BJ (cell line): ENCODE measurements at regions of chr2 and their contacts with region 1.

Region 1: GRCh38 chr2:219498280-219499057 is at the start of gene GMPPA:
- DNase-seq: peak; percentile 99
- H3K4me3 ChIP-seq: peak within 1 kb of the TSS; percentile 90
- H3K27me3 ChIP-seq: no peaks in the 10 kb centered on the region
- CTCF ChIP-seq: 0 out of 2 replicates have a peak, but pooled peaks have one; percentile 4
- polyA plus RNA-seq, gene GMPPA: 123 and 171 TPM in 2 replicates

Region 2: DNA sequence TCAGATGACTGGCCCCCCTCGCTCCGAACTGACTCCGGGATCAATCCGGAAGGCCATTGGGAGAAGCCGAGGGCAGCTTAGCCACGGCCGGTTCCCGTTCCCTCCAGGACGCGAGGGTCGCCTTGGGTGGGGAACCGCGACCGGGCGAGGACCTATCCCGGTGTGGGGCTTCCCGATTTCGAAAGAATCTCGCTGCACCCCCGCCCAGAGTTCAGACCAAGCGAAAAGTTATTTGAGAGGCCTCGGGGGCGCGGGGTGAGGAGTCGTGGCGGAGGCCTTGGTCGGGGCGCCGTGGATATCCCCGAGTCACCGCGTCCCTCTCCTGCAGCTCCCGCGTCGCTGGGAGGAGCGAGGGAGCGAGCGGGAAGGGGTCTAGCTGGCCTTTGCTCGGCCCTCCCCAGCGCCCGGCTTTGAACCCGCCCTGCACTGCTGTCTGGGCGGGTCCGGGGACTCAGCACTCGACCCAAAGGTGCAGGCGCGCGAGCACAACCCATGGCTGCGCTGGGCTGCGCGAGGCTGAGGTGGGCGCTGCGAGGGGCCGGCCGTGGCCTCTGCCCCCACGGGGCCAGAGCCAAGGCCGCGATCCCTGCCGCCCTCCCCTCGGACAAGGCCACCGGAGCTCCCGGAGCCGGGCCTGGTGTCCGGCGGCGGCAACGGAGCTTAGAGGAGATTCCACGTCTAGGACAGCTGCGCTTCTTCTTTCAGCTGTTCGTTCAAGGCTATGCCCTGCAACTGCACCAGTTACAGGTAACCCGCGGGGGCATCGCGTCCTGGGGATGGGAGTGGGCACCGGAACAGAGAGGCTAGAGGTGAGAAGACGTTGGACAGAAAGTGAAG is 716.6 kb before region 1 on chr2 and contains the start of gene CYP27A1:
- CTCF ChIA-PET with region 1: no interaction called
- POLR2A ChIA-PET with region 1: no interaction called
- DNase-seq: no peak
- H3K4me3 ChIP-seq: peak within 1 kb of the TSS; percentile 61
- H3K27me3 ChIP-seq: no peaks in the 10 kb centered on the region
- CTCF ChIP-seq: no peak
- polyA plus RNA-seq, gene CYP27A1: 17.2 and 26.8 TPM in 2 replicates

Region 3: GRCh38 chr2:219452838-219453317 is 45.6 kb before region 1 on chr2:
- CTCF ChIA-PET with region 1: interaction called, 8 read pairs
- POLR2A ChIA-PET with region 1: interaction called, 26 read pairs
- DNase-seq: peak; percentile 78
- H3K4me3 ChIP-seq: no peak overlapping the region
- H3K27me3 ChIP-seq: no peaks in the 10 kb centered on the region
- CTCF ChIP-seq: no peak

Region 4: DNA sequence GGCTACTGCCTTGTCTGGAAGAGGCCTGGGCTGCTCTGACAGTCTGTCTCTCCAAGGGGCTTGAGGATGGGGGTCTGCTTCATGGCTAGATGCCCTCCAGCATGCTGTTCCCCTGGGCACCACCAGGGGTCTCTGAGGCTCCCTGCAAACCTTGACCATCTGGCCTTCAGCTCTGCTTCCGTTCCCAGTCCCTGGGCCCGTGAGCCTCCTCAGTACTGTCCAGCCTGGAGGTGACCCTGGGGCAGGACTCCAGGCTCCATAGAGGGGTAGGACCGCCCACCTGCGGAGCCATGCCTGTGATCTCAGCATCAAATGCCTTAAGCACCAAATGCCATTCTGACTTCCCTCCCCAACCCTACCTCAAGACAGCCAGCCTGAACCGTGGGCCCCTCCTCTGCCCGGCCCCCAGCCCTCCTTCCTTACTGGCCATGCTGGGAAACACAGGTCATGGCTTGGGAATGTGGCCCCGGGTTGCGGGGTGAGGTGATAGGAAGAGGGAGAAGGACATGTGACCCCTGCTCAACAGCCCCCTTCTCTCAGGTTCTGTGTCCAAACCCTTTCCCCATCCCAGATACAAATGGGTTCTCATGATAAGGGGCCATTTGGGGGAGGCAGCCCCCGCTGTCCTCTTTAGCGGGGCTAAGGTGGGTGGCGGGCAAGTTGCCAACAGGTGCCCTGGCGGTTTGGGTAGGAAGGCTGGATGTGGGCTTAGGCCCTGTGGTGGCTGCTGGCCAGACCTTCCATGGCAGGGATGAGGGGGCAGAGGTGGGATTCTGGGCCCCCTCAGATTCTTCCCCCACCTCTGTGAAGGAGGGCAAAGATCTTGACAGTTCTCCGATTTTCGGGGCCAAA is 38.8 kb before region 1 on chr2:
- CTCF ChIA-PET with region 1: interaction called, 10 read pairs
- POLR2A ChIA-PET with region 1: no interaction called
- DNase-seq: no peak
- H3K4me3 ChIP-seq: no peak overlapping the region
- H3K27me3 ChIP-seq: no peaks in the 10 kb centered on the region
- CTCF ChIP-seq: peak; percentile 98

Region 5: GRCh38 chr2:219469186-219469724 is 29.2 kb before region 1 on chr2:
- CTCF ChIA-PET with region 1: interaction called, 12 read pairs
- POLR2A ChIA-PET with region 1: interaction called, 4 read pairs
- DNase-seq: no peak
- H3K4me3 ChIP-seq: no peak overlapping the region
- H3K27me3 ChIP-seq: no peaks in the 10 kb centered on the region
- CTCF ChIP-seq: no peak

Region 6: DNA sequence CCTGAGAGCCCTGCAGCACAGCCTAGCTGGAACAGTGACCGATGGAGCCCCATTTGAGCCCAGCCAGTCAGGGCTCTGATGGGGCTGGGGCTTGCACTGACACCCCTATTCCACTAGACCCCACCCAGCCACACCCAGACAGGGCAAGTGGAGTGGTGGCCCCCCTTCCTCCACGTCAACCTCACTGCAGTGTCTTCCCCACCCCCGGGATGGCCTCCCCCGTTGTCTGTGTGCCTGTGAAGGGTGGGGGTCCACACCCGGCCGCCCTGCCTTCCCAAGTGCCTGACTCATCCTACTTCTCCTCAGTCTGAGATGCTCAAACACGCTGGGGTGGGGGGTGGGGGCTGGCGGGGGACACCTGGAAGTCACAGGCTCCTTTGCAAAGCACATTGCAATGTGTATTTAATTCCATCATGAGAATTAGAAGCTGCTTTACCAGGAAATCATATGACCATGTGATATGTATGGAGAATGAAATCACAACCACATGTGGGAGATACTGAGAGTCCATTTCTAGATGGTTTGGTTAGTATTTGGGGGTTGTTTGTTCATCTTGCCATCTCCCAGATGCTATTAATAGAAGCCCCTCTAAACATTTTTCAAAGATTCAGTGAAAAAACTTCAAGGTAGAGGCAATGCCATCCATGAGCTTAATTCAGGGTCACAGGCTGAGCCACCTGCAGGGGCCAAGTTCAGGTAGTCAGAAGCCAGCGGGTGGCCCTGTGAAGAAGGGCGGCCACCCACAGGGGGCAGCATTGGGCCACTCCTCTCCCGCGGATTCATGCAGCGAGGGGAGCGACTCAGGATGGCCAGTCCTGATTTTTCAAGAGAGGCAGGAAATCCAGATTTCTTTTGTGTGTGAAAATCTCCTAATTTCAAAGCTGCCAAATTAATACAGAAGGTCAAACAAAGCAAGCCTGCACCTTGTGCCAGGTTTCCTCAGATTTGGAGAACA is 22.5 kb before region 1 on chr2:
- CTCF ChIA-PET with region 1: interaction called, 21 read pairs
- POLR2A ChIA-PET with region 1: no interaction called
- DNase-seq: no peak
- H3K4me3 ChIP-seq: no peak overlapping the region
- H3K27me3 ChIP-seq: no peaks in the 10 kb centered on the region
- CTCF ChIP-seq: peak; percentile 93

Region 7: GRCh38 chr2:219484343-219485200 is 13.9 kb before region 1 on chr2:
- CTCF ChIA-PET with region 1: interaction called, 28 read pairs
- POLR2A ChIA-PET with region 1: no interaction called
- DNase-seq: no peak
- H3K4me3 ChIP-seq: no peak overlapping the region
- H3K27me3 ChIP-seq: no peaks in the 10 kb centered on the region
- CTCF ChIP-seq: no peak

Region 8: DNA sequence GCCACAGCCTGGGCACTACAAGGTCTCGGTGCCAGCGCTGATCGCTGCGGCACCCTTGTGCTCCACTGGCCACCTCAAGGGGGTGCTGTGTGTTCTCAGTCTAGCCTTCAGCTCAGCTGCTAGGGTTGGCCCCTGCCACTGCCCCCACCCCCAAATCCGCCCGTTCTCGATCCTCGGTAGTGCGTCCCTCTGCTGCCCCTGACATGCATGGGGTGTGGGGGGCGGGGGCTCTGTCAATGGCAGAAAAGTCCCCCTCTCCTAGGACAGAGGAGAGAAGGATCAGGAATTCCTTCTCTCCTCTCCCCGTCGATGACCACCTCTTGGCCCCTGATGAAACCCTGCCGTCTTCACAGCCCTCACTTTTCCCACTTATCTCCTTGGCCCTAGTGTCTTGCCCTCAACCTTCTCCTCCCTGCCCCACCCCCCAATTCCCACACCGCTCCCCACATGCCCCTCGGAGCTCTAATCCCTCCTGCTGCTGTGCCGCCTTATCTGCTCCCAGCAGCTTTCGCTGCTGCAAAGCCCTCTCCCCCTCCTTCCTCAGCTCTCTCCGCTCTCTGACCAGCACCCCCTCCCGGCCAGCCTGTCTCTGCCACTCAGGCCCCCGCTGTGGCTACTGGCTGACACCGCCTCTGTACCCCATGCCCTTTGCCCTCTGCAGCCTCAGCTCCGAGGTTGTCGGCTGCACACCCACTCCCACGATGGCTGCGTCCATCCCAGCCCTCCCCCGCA is 11.5 kb after region 1 on chr2:
- CTCF ChIA-PET with region 1: interaction called, 872 read pairs
- POLR2A ChIA-PET with region 1: interaction called, 5 read pairs
- DNase-seq: no peak
- H3K4me3 ChIP-seq: peak overlapping the region; percentile 11
- H3K27me3 ChIP-seq: peaks cover 25% of the 10 kb centered on the region
- CTCF ChIP-seq: peak; percentile 87